ENCODE measurements at regions of chr1 and their contacts with region 1.

Region 1: GRCh38 chr1:159891275-159892157 is 8.4 kb downstream of the CFAP45 start:
- DNase-seq: peak; percentile 54 to 90 (median 70)
- ATAC-seq: peak; percentile 95
- H3K4me3 ChIP-seq: no peak overlapping the region
- H3K4me3 Mint-ChIP-seq: no peak overlapping the region
- H3K27ac ChIP-seq: no peak overlapping the region
- H3K27ac Mint-ChIP-seq: no peak overlapping the region
- H3K4me1 ChIP-seq: peaks cover 13% of the 10 kb centered on the region
- H3K4me1 Mint-ChIP-seq: no peaks in the 10 kb centered on the region
- H3K27me3 ChIP-seq: no peaks in the 10 kb centered on the region
- H3K27me3 Mint-ChIP-seq: no peaks in the 10 kb centered on the region
- CTCF ChIP-seq: peak; percentile 99

Region 2: DNA sequence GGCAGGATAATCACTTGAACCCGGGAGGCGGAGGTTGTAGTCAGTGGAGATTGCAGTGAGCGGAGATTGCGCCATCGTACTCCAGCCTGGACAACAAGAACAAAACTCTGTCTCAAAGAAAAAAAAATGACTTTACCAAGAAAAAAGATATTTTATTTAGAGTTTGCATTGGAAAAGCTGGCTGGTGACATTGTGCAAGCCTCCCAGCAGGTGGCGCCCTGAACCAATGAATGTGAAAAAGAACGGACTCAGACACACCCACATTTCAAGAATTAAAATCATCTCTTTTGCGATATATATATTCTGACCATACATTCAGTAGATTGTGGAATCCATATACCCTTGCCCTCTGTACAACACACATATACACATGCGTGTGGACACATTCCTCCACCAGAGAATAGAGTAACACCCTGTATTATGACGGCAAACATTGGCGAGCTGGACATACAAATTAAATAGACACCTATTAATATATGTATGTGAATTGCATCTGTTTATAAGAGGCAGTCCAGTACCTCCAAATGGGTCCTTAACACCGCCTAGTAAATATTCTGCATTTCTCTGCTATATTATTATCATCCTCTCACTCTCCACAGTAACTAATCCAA is 759.1 kb before region 1 on chr1:
- CTCF ChIA-PET with region 1: no interaction called
- POLR2A ChIA-PET with region 1: no interaction called
- intact Hi-C with region 1: loop called in 1 of 2 experiments (anchors 2 kb)
- DNase-seq: peak; percentile 38 to 72 (median 54)
- ATAC-seq: no peak
- H3K4me3 ChIP-seq: no peak overlapping the region
- H3K4me3 Mint-ChIP-seq: no peak overlapping the region
- H3K27ac ChIP-seq: no peak overlapping the region
- H3K27ac Mint-ChIP-seq: no peak overlapping the region
- H3K4me1 ChIP-seq: no peaks in the 10 kb centered on the region
- H3K4me1 Mint-ChIP-seq: no peaks in the 10 kb centered on the region
- H3K27me3 ChIP-seq: peaks cover 4 to 14% of the 10 kb centered on the region in 2 experiments
- H3K27me3 Mint-ChIP-seq: peaks cover 13% of the 10 kb centered on the region
- CTCF ChIP-seq: peak; percentile 86

Region 3: DNA sequence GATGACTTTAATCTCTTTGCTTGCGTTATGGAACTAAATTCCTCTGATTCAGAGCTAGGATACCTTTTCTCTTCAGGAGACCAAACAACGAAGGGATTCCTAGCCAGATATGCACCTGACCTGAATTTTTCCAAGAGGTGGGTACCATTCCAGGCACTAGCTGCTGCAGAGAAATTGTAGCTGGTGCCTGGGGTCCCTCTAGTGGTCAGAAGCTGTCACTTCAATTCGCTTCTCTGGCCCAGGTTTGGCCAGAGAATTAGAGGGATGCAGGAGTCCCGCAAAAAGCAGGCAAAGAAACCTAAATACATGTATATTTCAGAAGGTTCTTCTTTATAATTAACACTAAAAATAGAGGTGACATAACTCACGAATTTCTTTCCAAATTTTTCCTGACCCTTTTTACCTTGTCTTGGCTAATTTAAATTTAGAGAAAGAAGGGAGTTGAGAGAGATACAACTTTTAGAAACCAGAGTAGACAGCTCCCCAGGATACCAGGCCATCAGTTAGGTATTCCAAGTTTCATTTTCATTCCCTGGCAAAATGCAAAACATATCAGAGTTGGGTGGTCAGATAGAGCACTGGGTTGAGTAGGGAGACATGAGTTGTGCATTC is 677.3 kb before region 1 on chr1:
- CTCF ChIA-PET with region 1: no interaction called
- POLR2A ChIA-PET with region 1: no interaction called
- intact Hi-C with region 1: loop called in 1 of 2 experiments (anchors 10 kb)
- DNase-seq: peak in 10 of 14 experiments; percentile 4 to 62 (median 16)
- ATAC-seq: no peak
- H3K4me3 ChIP-seq: no peak overlapping the region
- H3K4me3 Mint-ChIP-seq: no peak overlapping the region
- H3K27ac ChIP-seq: no peak overlapping the region
- H3K27ac Mint-ChIP-seq: no peak overlapping the region
- H3K4me1 ChIP-seq: no peaks in the 10 kb centered on the region
- H3K4me1 Mint-ChIP-seq: no peaks in the 10 kb centered on the region
- H3K27me3 ChIP-seq: peaks cover 5 to 9% of the 10 kb centered on the region in 2 experiments
- H3K27me3 Mint-ChIP-seq: peaks cover 73% of the 10 kb centered on the region
- CTCF ChIP-seq: peak; percentile 98

Region 4: DNA sequence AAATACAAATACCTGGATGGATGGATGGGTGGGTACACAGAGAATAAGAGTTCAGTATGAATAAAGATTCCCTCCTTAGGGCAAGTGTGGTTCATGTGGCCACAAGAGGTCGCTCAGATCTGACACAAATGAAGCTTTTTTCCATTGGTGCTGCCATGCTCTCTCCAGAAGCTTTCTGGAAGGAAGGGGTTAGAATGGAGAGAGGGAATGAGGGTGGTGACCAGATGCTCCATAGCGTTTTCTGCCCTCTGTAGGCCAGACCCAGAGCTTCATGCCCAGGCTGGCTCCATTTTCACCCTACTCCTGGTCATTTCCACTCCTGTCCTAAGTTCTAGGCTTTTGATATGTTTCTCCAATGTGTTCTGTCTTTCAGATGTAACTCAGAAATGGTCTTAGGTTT is 92.6 kb before region 1 on chr1:
- CTCF ChIA-PET with region 1: interaction called, 42 read pairs
- POLR2A ChIA-PET with region 1: interaction called, 7 read pairs
- intact Hi-C with region 1: loop called (anchors 1 kb)
- DNase-seq: peak; percentile 11 to 77 (median 29)
- ATAC-seq: peak; percentile 59
- H3K4me3 ChIP-seq: no peak overlapping the region
- H3K4me3 Mint-ChIP-seq: no peak overlapping the region
- H3K27ac ChIP-seq: no peak overlapping the region
- H3K27ac Mint-ChIP-seq: no peak overlapping the region
- H3K4me1 ChIP-seq: peaks cover 32% of the 10 kb centered on the region
- H3K4me1 Mint-ChIP-seq: peaks cover 16% of the 10 kb centered on the region
- H3K27me3 ChIP-seq: peaks cover 0 to 3% of the 10 kb centered on the region in 2 experiments
- H3K27me3 Mint-ChIP-seq: peaks cover 3% of the 10 kb centered on the region
- CTCF ChIP-seq: peak; percentile 73

Region 5: DNA sequence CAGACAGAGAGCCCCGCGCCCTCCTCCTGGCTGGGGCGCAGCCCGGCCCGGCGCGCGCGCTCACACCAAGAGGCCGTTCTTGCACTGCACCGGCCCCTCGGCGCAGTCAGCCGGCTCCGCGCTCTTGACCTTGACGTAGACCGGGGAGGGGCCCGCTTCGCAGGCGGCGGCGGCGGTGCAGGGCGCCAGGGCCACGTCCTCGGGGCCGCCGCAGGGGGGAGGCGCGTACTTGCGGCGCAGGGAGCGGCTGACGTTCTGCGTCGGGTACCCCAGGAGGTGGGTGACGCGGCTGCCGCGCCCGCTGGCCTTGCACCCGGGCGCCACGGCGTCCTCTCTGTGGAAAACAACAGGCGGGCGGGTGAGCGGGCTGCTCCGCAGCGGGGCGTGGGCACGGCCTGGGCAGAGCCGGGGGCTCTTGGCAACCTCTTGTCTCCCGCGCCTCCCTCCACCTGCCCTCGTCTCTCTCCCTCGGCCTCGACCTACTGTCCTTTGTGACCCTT is 36.8 kb before region 1 on chr1:
- CTCF ChIA-PET with region 1: no interaction called
- POLR2A ChIA-PET with region 1: no interaction called
- intact Hi-C with region 1: loop called in 1 of 2 experiments (anchors 2 kb)
- DNase-seq: peak; percentile 55 to 87 (median 75)
- ATAC-seq: peak; percentile 96
- H3K4me3 ChIP-seq: peak overlapping the region; percentile 70
- H3K4me3 Mint-ChIP-seq: peak overlapping the region; percentile 95
- H3K27ac ChIP-seq: peak overlapping the region in 1 of 2 donors; percentile 46
- H3K27ac Mint-ChIP-seq: peak overlapping the region; percentile 88
- H3K4me1 ChIP-seq: peaks cover 12% of the 10 kb centered on the region
- H3K4me1 Mint-ChIP-seq: peaks cover 20% of the 10 kb centered on the region
- H3K27me3 ChIP-seq: no peaks in the 10 kb centered on the region
- H3K27me3 Mint-ChIP-seq: no peaks in the 10 kb centered on the region
- CTCF ChIP-seq: no peak

Region 6: GRCh38 chr1:160006312-160006940 is 114.9 kb after region 1 on chr1:
- CTCF ChIA-PET with region 1: interaction called, 15 read pairs
- POLR2A ChIA-PET with region 1: no interaction called
- intact Hi-C with region 1: loop called in 1 of 2 experiments (anchors 5 kb)
- DNase-seq: peak; percentile 59 to 87 (median 68)
- ATAC-seq: peak; percentile 93
- H3K4me3 ChIP-seq: no peak overlapping the region
- H3K4me3 Mint-ChIP-seq: no peak overlapping the region
- H3K27ac ChIP-seq: no peak overlapping the region
- H3K27ac Mint-ChIP-seq: no peak overlapping the region
- H3K4me1 ChIP-seq: no peaks in the 10 kb centered on the region
- H3K4me1 Mint-ChIP-seq: no peaks in the 10 kb centered on the region
- H3K27me3 ChIP-seq: peaks cover 3 to 4% of the 10 kb centered on the region in 2 experiments
- H3K27me3 Mint-ChIP-seq: peaks cover 9% of the 10 kb centered on the region
- CTCF ChIP-seq: peak; percentile 92

Region 7: DNA sequence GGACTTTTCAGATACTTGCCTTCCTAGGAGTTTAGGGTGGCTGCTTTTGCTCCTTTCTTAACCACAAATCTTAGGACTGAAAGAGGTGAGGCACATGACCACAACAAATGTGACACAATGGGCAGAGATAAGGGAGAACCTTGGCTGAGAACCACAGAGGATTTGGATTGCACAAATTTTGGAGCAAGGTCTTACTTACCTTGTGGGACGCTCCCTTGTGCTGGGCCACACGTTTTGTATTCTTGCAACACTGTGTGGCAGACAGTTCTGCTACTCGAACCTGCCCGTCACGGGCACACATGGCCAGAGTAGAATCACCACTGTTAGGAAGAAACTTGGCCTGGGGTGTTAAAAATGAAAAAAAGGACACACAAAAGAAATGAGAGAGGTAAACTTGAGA is 346.9 kb after region 1 on chr1:
- CTCF ChIA-PET with region 1: no interaction called
- POLR2A ChIA-PET with region 1: no interaction called
- intact Hi-C with region 1: no loop called
- DNase-seq: no peak
- ATAC-seq: no peak
- H3K4me3 ChIP-seq: no peak overlapping the region
- H3K4me3 Mint-ChIP-seq: no peak overlapping the region
- H3K27ac ChIP-seq: no peak overlapping the region
- H3K27ac Mint-ChIP-seq: no peak overlapping the region
- H3K4me1 ChIP-seq: no peaks in the 10 kb centered on the region
- H3K4me1 Mint-ChIP-seq: peaks cover 23% of the 10 kb centered on the region
- H3K27me3 ChIP-seq: no peaks in the 10 kb centered on the region
- H3K27me3 Mint-ChIP-seq: no peaks in the 10 kb centered on the region
- CTCF ChIP-seq: no peak

Measured in CD4-positive, alpha-beta T cell (primary cell).